Transverse colon (tissue), 4 donors: ENCODE measurements at regions of chr10 and their contacts with region 1.

Region 1: GRCh38 chr10:58382489-58382995 is 2.7 kb upstream of the TFAM start:
- DNase-seq: no peak
- H3K4me3 ChIP-seq: no peak overlapping the region
- H3K27ac ChIP-seq: no peak overlapping the region
- H3K4me1 ChIP-seq: peaks cover 6 to 24% (median 20%) of the 10 kb centered on the region in 4 donors
- H3K27me3 ChIP-seq: no peaks in the 10 kb centered on the region
- CTCF ChIP-seq: no peak
- EP300 ChIP-seq: no peak
- POLR2A ChIP-seq: no peak

Region 2: DNA sequence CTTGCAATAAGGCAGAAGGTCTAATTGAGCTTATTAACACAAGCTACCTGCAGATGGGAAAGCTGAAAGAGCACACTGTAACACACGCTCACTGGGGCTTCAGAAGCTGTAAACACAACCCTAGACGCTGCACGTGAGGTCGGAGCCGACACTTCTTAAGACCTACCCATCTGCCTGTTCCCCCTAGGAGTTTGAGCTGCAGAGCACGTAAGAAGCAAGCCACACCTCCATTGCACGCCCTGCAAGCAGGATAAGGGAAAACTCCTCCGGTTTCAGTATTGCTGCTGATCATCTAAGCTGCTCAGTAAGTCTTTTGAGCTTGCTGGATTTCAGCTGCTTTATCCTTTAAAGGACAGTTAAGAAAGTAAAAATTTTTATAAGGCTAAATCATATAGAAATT is 1777.5 kb before region 1 on chr10:
- in situ Hi-C with region 1: no loop called
- intact Hi-C with region 1: no loop called
- DNase-seq: no peak
- H3K4me3 ChIP-seq: no peak overlapping the region
- H3K27ac ChIP-seq: no peak overlapping the region
- H3K4me1 ChIP-seq: no peaks in the 10 kb centered on the region
- H3K27me3 ChIP-seq: no peaks in the 10 kb centered on the region
- CTCF ChIP-seq: no peak
- EP300 ChIP-seq: no peak
- POLR2A ChIP-seq: no peak

Region 3: DNA sequence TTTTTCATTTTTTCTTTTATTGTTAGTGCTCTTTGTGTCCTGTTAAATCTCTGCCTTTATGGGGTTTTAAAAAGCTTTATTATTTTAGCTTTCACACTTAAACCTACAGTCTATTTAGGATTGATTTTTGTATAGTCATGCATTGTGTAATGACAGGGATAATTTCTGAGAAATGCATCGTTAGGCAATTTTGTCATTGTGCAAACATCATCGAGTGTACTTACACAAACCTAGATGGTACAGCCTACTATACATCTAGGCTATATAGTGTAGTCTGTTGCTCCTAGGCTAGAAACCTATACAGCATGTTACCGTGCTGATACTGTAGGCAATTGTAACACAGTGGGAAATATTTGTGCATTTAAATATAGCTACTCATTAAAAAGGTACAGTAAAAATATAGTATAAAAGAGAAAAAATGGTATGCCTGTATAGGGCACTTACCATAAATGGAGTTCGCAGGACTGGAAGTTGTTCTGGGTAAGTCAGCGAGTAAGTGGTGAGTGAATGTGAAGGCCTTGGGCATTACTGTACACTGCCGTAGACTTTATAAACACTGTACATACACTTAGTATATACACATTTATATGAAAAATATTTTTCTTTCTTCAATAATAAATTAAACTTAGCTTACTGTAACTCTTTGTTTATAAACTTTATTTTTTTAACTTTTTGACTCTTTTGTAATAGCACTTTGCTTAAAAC is 31.8 kb before region 1 on chr10:
- in situ Hi-C with region 1: no loop called
- intact Hi-C with region 1: loop called (anchors 2 kb)
- DNase-seq: no peak
- H3K4me3 ChIP-seq: no peak overlapping the region
- H3K27ac ChIP-seq: no peak overlapping the region
- H3K4me1 ChIP-seq: peaks cover 0 to 44% (median 12%) of the 10 kb centered on the region in 4 donors
- H3K27me3 ChIP-seq: no peaks in the 10 kb centered on the region
- CTCF ChIP-seq: no peak
- EP300 ChIP-seq: no peak
- POLR2A ChIP-seq: no peak